Left cardiac atrium (tissue), 4 donors: ENCODE measurements at regions of chr19 and their contacts with region 1.

Region 1: GRCh38 chr19:56403764-56404704 is at the start of gene ZNF583:
- DNase-seq: peak; percentile 97
- ATAC-seq: peak; percentile 99
- total RNA-seq, gene ZNF583: 5.0 to 6.2 TPM

Region 2: DNA sequence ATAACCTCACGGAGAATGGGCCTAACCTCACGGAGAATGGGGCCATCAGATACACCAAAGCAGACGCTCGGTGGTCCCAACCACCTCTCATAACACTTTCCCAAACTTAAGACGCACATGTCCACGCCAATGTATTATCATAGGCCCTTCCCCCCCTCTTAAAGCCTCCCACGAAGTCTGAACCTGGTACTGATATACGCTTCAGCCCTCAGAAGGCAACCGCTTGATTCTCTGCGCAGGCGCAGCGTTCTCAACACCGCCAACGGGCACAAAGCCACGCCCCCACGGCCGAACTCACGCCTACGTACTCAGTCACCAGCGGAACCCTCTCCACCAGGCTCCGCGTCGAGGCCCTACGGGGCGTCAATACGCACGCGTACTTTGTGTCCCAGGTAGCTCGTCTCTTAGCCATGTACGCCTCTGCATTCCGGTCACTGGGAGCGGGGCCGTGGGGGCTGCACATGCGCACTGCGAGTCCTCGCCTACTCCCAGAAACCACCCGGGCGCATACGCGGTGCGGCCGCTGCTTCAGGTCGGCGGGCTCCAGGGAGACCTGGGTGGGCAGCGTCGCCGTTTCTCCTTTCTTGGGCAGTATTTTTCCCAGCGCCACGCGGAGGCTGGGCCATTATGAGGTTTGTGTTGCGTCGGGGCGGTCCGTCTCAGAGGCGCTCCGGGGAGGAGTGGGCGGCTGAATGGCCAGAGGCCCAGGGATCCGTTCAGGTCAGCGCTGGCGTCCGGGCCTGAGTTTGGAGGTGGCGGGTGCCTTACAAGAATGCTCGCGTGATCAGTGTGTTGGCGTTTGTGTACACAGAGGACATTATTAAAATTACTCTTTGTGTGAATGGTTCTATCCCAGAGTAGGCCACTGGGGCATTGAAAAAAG is 36.0 kb before region 1 on chr19:
- intact Hi-C with region 1: no loop called
- DNase-seq: peak; percentile 98
- ATAC-seq: peak; percentile 97 to 99

Region 3: GRCh38 chr19:56538254-56538760 is 134.3 kb after region 1 on chr19:
- intact Hi-C with region 1: loop called in 1 of 2 experiments (anchors 10 kb)
- DNase-seq: peak; percentile 93
- ATAC-seq: peak; percentile 97 to 99